ENCODE measurements at regions of chr9 and their contacts with region 1.

Region 1: GRCh38 chr9:114487607-114488300 is 17.5 kb downstream of the WHRN start:
- DNase-seq: peak in 6 of 10 donors; percentile 14 to 70 (median 59)
- H3K4me3 ChIP-seq: no peak overlapping the region
- H3K27ac ChIP-seq: peak overlapping the region in 18 of 59 donors; percentile 4 to 55 (median 36)
- H3K27me3 ChIP-seq: no peaks in the 10 kb centered on the region
- CTCF ChIP-seq: peak; percentile 61 to 92 (median 85)

Region 2: GRCh38 chr9:114413861-114414301 is 73.9 kb before region 1 on chr9:
- intact Hi-C with region 1: no loop called
- DNase-seq: no peak
- H3K4me3 ChIP-seq: no peak overlapping the region
- H3K27ac ChIP-seq: peak overlapping the region in 28 of 59 donors; percentile 11 to 63 (median 42)
- H3K27me3 ChIP-seq: no peaks in the 10 kb centered on the region
- CTCF ChIP-seq: no peak

Region 3: GRCh38 chr9:114448706-114449105 is 39.0 kb before region 1 on chr9:
- intact Hi-C with region 1: loop called in 1 of 2 experiments (anchors 5 kb)
- DNase-seq: peak in 1 of 10 donors; percentile 5
- H3K4me3 ChIP-seq: no peak overlapping the region
- H3K27ac ChIP-seq: peak overlapping the region in 28 of 59 donors; percentile 1 to 98 (median 54)
- H3K27me3 ChIP-seq: no peaks in the 10 kb centered on the region
- CTCF ChIP-seq: no peak

Region 4: GRCh38 chr9:114777821-114778609 is 290.3 kb after region 1 on chr9:
- intact Hi-C with region 1: no loop called
- DNase-seq: no peak
- H3K4me3 ChIP-seq: no peak overlapping the region
- H3K27ac ChIP-seq: no peak overlapping the region
- H3K27me3 ChIP-seq: peaks cover 0 to 22% (median 0%) of the 10 kb centered on the region in 45 donors
- CTCF ChIP-seq: no peak

Measured in dorsolateral prefrontal cortex (tissue), 120 donors.